ENCODE measurements at regions of chr17 and their contacts with region 1.

Region 1: GRCh38 chr17:19513897-19514488 is 19.7 kb upstream of the SLC47A1 start:
- DNase-seq: peak; percentile 66 to 76 (median 72)
- H3K4me3 ChIP-seq: no peak overlapping the region
- H3K27ac ChIP-seq: no peak overlapping the region
- H3K4me1 ChIP-seq: peaks cover 0 to 1% (median under 1%) of the 10 kb centered on the region in 4 experiments
- H3K27me3 ChIP-seq: no peaks in the 10 kb centered on the region

Region 2: GRCh38 chr17:19456016-19456927 is 57.7 kb before region 1 on chr17:
- CTCF ChIA-PET with region 1: no interaction called
- POLR2A ChIA-PET with region 1: no interaction called
- DNase-seq: no peak
- H3K4me3 ChIP-seq: no peak overlapping the region
- H3K27ac ChIP-seq: no peak overlapping the region
- H3K4me1 ChIP-seq: peaks cover 0 to 5% (median 0%) of the 10 kb centered on the region in 4 experiments
- H3K27me3 ChIP-seq: peaks cover 0 to 22% (median 13%) of the 10 kb centered on the region in 5 experiments

Region 3: DNA sequence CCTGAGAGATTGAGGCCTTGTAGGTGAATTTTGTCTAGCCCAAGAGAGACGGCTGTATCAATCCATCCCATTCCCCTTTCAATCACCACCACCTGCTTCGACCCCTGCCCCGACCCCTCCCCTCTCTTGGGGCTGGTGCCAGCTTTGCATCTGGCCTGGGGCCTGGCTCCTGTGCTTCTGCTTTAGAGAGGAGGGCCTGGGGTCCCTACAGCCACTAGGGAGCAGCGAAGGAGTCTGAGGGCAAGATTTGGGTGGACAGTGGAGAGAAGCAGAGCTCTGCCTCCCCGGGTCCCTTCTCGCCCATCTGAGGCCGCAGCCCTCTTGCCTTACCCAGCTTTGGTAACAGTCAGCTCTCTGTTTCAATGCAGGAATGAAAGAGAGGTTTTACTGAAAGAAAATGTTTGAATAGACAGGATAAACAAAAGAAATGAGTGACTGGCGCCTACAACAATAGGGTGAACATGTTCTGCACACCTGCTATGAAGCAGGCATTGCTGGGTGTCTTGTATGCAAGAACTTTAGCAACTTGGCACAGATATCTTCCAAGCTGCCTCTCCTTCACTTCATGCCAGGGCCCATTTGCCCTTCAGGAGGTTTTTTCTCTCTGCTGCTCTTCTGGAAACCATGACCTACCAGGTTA is 77.0 kb after region 1 on chr17:
- CTCF ChIA-PET with region 1: interaction called, 4 read pairs
- POLR2A ChIA-PET with region 1: interaction called, 10 read pairs
- DNase-seq: no peak
- H3K4me3 ChIP-seq: no peak overlapping the region
- H3K27ac ChIP-seq: no peak overlapping the region
- H3K4me1 ChIP-seq: peaks cover 0 to 10% (median 0%) of the 10 kb centered on the region in 4 experiments
- H3K27me3 ChIP-seq: no peaks in the 10 kb centered on the region

Region 4: DNA sequence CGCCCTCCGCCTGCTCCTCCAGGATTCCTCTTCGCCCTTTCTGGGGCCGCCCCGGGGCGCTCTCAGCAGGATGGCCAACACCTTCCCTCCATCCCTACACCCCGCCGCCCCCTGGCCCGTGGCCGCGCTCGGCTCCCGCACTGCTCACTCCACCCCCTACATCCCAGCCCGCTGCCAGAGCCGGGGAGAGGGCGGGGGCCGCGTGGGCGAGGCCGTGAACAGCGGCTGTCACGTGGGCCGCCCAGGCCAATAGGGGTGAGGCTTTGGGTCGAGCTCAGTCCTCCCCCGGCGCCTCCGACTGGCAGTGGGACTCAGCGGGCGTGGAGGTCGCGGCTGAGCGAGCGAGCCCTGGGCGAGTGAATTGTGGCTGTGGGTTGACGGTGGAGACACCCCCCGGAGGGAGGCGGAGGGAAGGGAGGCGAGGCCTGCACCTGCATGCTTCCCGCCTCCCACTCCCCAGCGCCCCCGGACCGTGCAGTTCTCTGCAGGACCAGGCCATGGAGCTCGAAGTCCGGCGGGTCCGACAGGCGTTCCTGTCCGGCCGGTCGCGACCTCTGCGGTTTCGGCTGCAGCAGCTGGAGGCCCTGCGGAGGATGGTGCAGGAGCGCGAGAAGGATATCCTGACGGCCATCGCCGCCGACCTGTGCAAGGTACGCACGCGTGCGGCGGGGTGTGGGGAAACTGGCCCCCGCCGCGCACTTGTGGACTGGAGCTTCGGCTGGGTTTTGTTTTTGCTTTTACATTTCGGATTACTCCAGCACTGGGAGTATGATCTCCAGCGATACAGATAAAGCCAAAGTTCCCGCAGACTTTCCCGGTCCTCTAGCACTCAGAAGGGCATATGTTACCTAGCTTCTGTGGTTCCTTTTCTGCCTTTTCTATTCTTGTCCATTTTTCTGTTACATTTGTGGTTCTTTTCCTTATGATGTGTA is 134.7 kb after region 1 on chr17 and contains the start of gene ALDH3A2:
- CTCF ChIA-PET with region 1: interaction called, 13 read pairs
- POLR2A ChIA-PET with region 1: no interaction called
- DNase-seq: peak; percentile 81 to 93 (median 91)
- H3K4me3 ChIP-seq: peak within 1 kb of the TSS; percentile 28 to 89 (median 80)
- H3K27ac ChIP-seq: peak within 1 kb of the TSS in 1 of 2 experiments; percentile 25
- H3K4me1 ChIP-seq: peaks cover 10 to 32% (median 28%) of the 10 kb centered on the region in 4 experiments
- H3K27me3 ChIP-seq: no peaks in the 10 kb centered on the region

Region 5: DNA sequence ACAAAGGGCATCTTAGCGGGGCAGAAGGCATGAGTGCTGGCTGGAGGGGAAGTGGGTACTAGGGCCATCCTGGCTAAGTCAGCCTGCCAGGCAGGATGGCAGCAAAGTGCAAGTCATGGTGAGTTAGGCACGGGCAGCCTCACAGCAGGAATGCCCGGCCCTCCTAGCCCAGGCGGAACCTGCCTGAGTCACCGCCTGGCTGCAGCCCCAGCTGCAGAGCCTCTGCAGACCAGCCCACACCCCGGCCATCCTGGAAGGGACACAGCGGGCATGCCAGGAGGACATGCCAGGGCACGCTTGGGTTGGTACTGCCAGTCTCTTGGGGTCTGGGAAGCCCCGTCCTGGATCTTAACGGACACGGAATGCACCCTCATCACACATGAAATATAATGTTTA is 239.1 kb after region 1 on chr17:
- CTCF ChIA-PET with region 1: no interaction called
- POLR2A ChIA-PET with region 1: interaction called, 10 read pairs
- DNase-seq: peak; percentile 72 to 92 (median 89)
- H3K4me3 ChIP-seq: peak overlapping the region in 2 of 7 experiments; percentile 32 to 42
- H3K27ac ChIP-seq: no peak overlapping the region
- H3K4me1 ChIP-seq: peaks cover 0 to 16% (median 12%) of the 10 kb centered on the region in 4 experiments
- H3K27me3 ChIP-seq: peaks cover 0 to under 1% (median 0%) of the 10 kb centered on the region in 5 experiments

Region 6: GRCh38 chr17:19766422-19767270 is 252.7 kb after region 1 on chr17:
- CTCF ChIA-PET with region 1: interaction called, 45 read pairs
- POLR2A ChIA-PET with region 1: no interaction called
- DNase-seq: peak; percentile 46 to 57 (median 56)
- H3K4me3 ChIP-seq: no peak overlapping the region
- H3K27ac ChIP-seq: no peak overlapping the region
- H3K4me1 ChIP-seq: peaks cover 0 to 20% (median 6%) of the 10 kb centered on the region in 4 experiments
- H3K27me3 ChIP-seq: peaks cover 0 to 2% (median 0%) of the 10 kb centered on the region in 5 experiments